Activated CD8-positive, alpha-beta T cell treated with anti-CD3 and anti-CD28 coated beads, Interleukin-2, amount 10 ng/mL, durations not matched to agents 7 days and 5 days (primary cell): ENCODE measurements at regions of chr1 and their contacts with region 1.

Region 1: DNA sequence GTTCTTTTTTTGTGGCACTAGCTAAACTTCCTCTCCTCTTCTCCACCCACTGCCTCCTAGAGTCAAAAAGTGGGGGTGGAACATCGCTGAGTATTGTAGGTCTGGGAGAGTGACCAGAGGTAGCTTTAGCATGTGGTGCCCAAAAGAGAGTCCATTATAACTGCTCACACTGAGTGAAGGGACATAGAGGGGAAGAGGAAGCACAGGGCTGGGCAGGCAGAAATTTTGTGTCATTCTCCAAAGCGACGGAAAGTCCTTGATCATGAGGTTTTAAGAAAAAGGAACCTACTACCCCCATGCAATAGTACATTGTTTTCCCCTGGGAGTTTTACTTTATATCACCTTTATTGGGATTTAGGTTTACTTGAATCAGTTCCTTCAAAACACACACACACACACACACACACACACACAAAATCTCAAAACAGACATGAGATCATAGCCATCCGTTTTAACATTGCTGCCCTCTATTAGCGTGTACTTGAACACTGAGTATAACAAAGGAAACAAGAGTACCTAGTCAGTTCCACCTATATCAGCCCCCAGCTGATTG is 4.1 kb downstream of the CD84 start:
- DNase-seq: no peak
- ATAC-seq: peak; percentile 14
- H3K4me3 Mint-ChIP-seq: peak overlapping the region; percentile 28
- H3K27ac Mint-ChIP-seq: peak overlapping the region; percentile 87
- H3K4me1 Mint-ChIP-seq: peaks cover 75% of the 10 kb centered on the region
- H3K27me3 Mint-ChIP-seq: no peaks in the 10 kb centered on the region

Region 2: GRCh38 chr1:160550572-160551034 is 24.6 kb before region 1 on chr1:
- CTCF ChIA-PET with region 1: interaction called, 31 read pairs
- POLR2A ChIA-PET with region 1: interaction called, 3 read pairs
- DNase-seq: peak; percentile 57
- ATAC-seq: peak; percentile 53
- H3K4me3 Mint-ChIP-seq: no peak overlapping the region
- H3K27ac Mint-ChIP-seq: no peak overlapping the region
- H3K4me1 Mint-ChIP-seq: no peaks in the 10 kb centered on the region
- H3K27me3 Mint-ChIP-seq: no peaks in the 10 kb centered on the region

Region 3: DNA sequence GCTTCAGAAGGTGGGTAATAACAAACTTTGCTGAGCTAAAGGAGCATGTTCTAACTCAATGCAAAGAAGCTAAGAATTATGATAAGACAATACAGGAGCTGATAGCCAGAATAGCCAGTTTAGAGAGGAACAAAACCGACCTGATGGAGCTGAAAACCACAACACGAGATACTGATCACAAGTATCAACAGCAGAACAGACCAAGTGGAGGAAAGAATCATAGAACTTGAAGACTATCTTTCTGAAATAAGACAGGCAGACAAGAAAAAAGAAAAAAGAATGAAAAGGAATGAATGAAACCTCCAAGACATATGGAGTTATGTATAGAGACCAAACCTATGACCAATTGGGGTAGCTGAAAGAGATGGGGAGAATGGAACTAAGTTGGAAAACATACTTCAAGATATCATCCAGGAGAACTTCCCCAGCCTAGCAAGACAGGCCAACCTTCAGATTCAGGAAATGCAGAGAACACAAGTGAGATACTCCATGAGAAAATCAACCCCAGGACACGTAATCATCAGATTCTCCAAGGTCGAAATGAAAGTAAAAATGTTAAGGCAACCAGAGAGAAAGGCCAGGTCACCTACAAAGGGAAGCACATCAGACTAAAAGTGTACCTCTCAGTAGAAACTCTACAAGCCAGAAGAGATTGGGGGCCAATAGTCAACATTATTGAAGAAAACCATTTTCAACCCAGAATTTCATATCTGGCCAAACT is 16.4 kb before region 1 on chr1:
- CTCF ChIA-PET with region 1: interaction called, 31 read pairs
- POLR2A ChIA-PET with region 1: interaction called, 9 read pairs
- DNase-seq: no peak
- ATAC-seq: peak; percentile 27
- H3K4me3 Mint-ChIP-seq: peak overlapping the region; percentile 51
- H3K27ac Mint-ChIP-seq: peak overlapping the region; percentile 53
- H3K4me1 Mint-ChIP-seq: peaks cover 42% of the 10 kb centered on the region
- H3K27me3 Mint-ChIP-seq: no peaks in the 10 kb centered on the region

Region 4: GRCh38 chr1:160916666-160917065 is 341.5 kb after region 1 on chr1:
- CTCF ChIA-PET with region 1: no interaction called
- POLR2A ChIA-PET with region 1: no interaction called
- DNase-seq: no peak
- ATAC-seq: no peak
- H3K4me3 Mint-ChIP-seq: no peak overlapping the region
- H3K27ac Mint-ChIP-seq: no peak overlapping the region
- H3K4me1 Mint-ChIP-seq: no peaks in the 10 kb centered on the region
- H3K27me3 Mint-ChIP-seq: peaks cover 30% of the 10 kb centered on the region